ENCODE measurements at regions of chr5 and their contacts with region 1.

Region 1: GRCh38 chr5:150560401-150561193 is 52.7 kb downstream of the NDST1 start:
- DNase-seq: peak; percentile 79
- ATAC-seq: peak; percentile 91
- H3K4me3 ChIP-seq: no peak overlapping the region
- H3K27ac ChIP-seq: no peak overlapping the region
- H3K4me1 ChIP-seq: peaks cover 3 to 7% of the 10 kb centered on the region in 2 experiments; a peak in 2 of 4 replicates
- H3K27me3 ChIP-seq: no peaks in the 10 kb centered on the region
- CTCF ChIP-seq: peak; percentile 81 to 94 (median 84)
- POLR2A ChIP-seq: no peak
- RAD21 ChIP-seq: peak; percentile 95

Region 2: DNA sequence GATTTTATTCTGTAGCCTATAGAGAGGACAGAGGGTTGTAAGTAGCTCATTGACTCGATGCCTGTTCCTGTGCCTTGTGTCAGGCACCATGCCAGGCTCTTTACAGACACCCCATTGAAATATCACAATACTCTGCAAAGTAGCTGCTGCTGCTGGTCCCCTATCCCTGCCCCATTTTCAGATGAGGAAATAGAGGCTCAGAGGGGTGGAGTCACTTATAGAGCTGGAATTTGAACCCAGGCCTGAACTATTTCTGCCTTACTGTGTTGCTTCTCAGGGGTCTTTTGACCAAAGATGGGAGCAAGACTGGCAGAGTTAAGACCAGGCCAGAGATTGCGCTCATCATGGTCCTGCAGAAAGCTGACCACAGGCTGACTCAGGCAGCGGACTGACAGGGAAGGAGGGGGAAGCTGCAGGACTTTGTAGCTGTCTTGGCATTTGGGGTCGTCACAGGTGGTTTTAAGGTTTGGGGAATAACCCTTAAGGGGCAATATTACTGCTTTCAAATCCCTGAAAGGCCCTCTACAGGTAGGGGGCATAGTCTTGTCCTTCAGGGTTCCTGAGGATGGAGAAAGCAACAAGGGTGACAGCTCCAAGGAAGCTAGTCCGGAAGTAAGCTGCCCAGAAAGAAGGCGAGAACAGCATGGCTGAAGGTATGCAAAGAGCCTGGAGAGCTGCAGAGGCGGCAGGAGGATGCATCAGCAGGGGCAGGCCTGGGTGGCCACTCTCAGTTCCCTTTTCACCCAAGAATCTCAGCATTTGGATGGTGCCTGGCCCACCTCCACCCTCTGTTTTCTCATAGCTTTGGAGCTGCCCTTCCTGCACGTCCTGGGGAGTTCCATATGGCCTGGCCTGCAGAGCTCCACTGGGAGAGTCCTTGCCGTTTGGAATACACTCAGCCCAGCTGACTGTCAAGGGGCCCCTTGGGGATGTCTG is 71.0 kb before region 1 on chr5:
- CTCF ChIA-PET with region 1: no interaction called
- POLR2A ChIA-PET with region 1: interaction called, 10 read pairs
- RAD21 ChIA-PET with region 1: no interaction called
- intact Hi-C with region 1: no loop called
- DNase-seq: no peak
- ATAC-seq: no peak
- H3K4me3 ChIP-seq: no peak overlapping the region
- H3K27ac ChIP-seq: no peak overlapping the region
- H3K4me1 ChIP-seq: peaks cover 18 to 53% of the 10 kb centered on the region in 2 experiments
- H3K27me3 ChIP-seq: no peaks in the 10 kb centered on the region
- CTCF ChIP-seq: no peak
- POLR2A ChIP-seq: no peak
- RAD21 ChIP-seq: no peak

Region 3: GRCh38 chr5:150656191-150657132 is 95.9 kb after region 1 on chr5:
- CTCF ChIA-PET with region 1: interaction called, 13 read pairs
- POLR2A ChIA-PET with region 1: no interaction called
- RAD21 ChIA-PET with region 1: no interaction called
- intact Hi-C with region 1: loop called (anchors 1 kb)
- DNase-seq: no peak
- ATAC-seq: peak; percentile 75
- H3K4me3 ChIP-seq: peak overlapping the region; percentile 46 to 64
- H3K27ac ChIP-seq: no peak overlapping the region
- H3K4me1 ChIP-seq: peaks cover 4 to 15% of the 10 kb centered on the region in 2 experiments; a peak in 3 of 4 replicates
- H3K27me3 ChIP-seq: no peaks in the 10 kb centered on the region
- CTCF ChIP-seq: peak; percentile 37 to 59 (median 55); a peak in 5 of 6 replicates
- POLR2A ChIP-seq: no peak
- RAD21 ChIP-seq: peak; percentile 79

Region 4: GRCh38 chr5:150710165-150710564 is 149.6 kb after region 1 on chr5:
- CTCF ChIA-PET with region 1: interaction called, 6 read pairs
- POLR2A ChIA-PET with region 1: no interaction called
- RAD21 ChIA-PET with region 1: interaction called in 1 of 2 experiments, 4 read pairs
- intact Hi-C with region 1: loop called (anchors 2 kb)
- DNase-seq: no peak
- ATAC-seq: no peak
- H3K4me3 ChIP-seq: no peak overlapping the region
- H3K27ac ChIP-seq: no peak overlapping the region
- H3K4me1 ChIP-seq: no peaks in the 10 kb centered on the region
- H3K27me3 ChIP-seq: no peaks in the 10 kb centered on the region
- CTCF ChIP-seq: peak; percentile 27 to 52 (median 30); a peak in 3 of 6 replicates
- POLR2A ChIP-seq: no peak
- RAD21 ChIP-seq: peak; percentile 43

Region 5: DNA sequence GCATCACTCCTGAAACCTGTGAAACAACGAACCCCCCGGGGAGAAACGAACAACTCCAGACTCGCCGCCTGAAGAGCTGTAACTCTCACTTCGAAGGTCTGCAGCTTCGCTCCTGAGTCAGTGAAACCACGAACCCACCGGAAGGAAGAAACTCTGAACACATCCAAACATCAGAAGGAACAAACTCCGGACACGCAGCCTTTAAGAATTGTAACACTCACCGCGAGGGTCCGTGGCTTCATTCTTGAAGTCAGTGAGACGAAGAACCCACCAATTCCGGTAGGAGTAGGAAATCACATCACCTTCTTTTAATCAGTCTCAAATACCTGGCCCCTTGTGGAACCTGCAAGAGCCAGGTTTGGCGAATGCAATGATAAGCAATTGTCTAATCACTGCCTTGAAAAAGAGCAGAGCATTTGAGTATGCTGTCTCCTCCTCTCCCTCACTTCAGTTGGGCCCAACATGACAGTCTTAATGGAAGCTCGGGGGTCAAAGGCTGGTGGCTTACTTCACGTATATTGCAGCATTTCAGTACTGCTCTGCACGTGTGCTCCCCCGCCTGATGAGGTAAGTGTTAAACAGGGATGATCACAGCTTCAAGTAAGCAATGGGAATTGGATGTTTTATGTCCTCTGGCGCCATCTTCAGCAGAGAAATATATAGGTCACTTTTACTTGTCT is 286.2 kb after region 1 on chr5:
- CTCF ChIA-PET with region 1: interaction called, 26 read pairs
- POLR2A ChIA-PET with region 1: no interaction called
- RAD21 ChIA-PET with region 1: interaction called, 4 to 5 read pairs
- intact Hi-C with region 1: loop called (anchors 1 kb)
- DNase-seq: peak; percentile 84
- ATAC-seq: peak; percentile 95
- H3K4me3 ChIP-seq: no peak overlapping the region
- H3K27ac ChIP-seq: no peak overlapping the region
- H3K4me1 ChIP-seq: peaks cover 0 to 4% of the 10 kb centered on the region in 2 experiments; a peak in 2 of 4 replicates
- H3K27me3 ChIP-seq: no peaks in the 10 kb centered on the region
- CTCF ChIP-seq: peak; percentile 44 to 99 (median 74); a peak in 5 of 6 replicates
- POLR2A ChIP-seq: no peak
- RAD21 ChIP-seq: peak; percentile 99